GM12878 (cell line): ENCODE measurements at regions of chr1 and their contacts with region 1.

Region 1: GRCh38 chr1:205121660-205122488 is at the start of gene RBBP5:
- DNase-seq: peak; percentile 94
- ATAC-seq: peak; percentile 97
- H3K4me3 ChIP-seq: peak within 1 kb of the TSS; percentile 96
- H3K27ac ChIP-seq: peak within 1 kb of the TSS; percentile 99
- H3K4me1 ChIP-seq: no peaks in the 10 kb centered on the region; the same call in 1 of the 2 replicates
- H3K27me3 ChIP-seq: no peaks in the 10 kb centered on the region
- CTCF ChIP-seq: peak; percentile 76 to 84 (median 82)
- EP300 ChIP-seq: peak in 1 of 2 experiments; percentile 22; a peak in 2 of 4 replicates
- POLR2A ChIP-seq: peak; percentile 99
- RAD21 ChIP-seq: peak; percentile 55
- polyA plus RNA-seq, gene RBBP5: 10.0 to 11.5 TPM

Region 2: DNA sequence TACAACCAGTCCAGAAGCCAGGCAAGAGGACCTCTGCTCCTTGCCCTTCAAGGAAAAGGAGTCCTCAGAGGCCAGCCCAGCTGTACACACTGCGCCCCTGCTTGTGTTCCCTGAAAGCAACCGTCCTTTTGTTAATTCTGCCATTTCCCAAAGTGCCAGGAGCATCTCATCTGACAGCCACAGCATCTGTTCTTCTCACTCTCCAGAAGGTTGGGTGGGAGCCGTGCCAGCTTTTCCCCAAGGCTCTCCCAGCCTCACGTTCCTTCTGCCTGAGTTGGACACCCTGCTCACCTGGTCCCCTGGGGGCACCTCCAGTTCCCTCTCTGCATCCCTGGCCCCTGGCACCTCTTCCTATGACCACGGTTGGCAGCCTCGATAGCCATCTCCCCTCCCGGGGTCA is 89.4 kb before region 1 on chr1:
- CTCF ChIA-PET with region 1: no interaction called
- POLR2A ChIA-PET with region 1: no interaction called
- RAD21 ChIA-PET with region 1: no interaction called
- SMC1A ChIA-PET with region 1: no interaction called
- in situ Hi-C with region 1: no loop called
- intact Hi-C with region 1: no loop called
- DNase-seq: no peak
- ATAC-seq: no peak
- H3K4me3 ChIP-seq: no peak overlapping the region
- H3K27ac ChIP-seq: no peak overlapping the region
- H3K4me1 ChIP-seq: no peaks in the 10 kb centered on the region
- H3K27me3 ChIP-seq: peaks cover 0 to 3% of the 10 kb centered on the region in 2 experiments; a peak in 2 of 4 replicates
- CTCF ChIP-seq: no peak
- EP300 ChIP-seq: no peak
- POLR2A ChIP-seq: no peak
- RAD21 ChIP-seq: no peak

Region 3: GRCh38 chr1:205108464-205108863 is 13.4 kb before region 1 on chr1:
- CTCF ChIA-PET with region 1: interaction called, 10 read pairs
- POLR2A ChIA-PET with region 1: interaction called, 5 read pairs
- RAD21 ChIA-PET with region 1: interaction called, 3 read pairs
- SMC1A ChIA-PET with region 1: interaction called, 10 read pairs
- in situ Hi-C with region 1: no loop called
- intact Hi-C with region 1: no loop called
- DNase-seq: no peak
- ATAC-seq: no peak
- H3K4me3 ChIP-seq: no peak overlapping the region
- H3K27ac ChIP-seq: no peak overlapping the region
- H3K4me1 ChIP-seq: no peaks in the 10 kb centered on the region
- H3K27me3 ChIP-seq: no peaks in the 10 kb centered on the region
- CTCF ChIP-seq: no peak
- EP300 ChIP-seq: no peak
- POLR2A ChIP-seq: no peak
- RAD21 ChIP-seq: no peak

Region 4: DNA sequence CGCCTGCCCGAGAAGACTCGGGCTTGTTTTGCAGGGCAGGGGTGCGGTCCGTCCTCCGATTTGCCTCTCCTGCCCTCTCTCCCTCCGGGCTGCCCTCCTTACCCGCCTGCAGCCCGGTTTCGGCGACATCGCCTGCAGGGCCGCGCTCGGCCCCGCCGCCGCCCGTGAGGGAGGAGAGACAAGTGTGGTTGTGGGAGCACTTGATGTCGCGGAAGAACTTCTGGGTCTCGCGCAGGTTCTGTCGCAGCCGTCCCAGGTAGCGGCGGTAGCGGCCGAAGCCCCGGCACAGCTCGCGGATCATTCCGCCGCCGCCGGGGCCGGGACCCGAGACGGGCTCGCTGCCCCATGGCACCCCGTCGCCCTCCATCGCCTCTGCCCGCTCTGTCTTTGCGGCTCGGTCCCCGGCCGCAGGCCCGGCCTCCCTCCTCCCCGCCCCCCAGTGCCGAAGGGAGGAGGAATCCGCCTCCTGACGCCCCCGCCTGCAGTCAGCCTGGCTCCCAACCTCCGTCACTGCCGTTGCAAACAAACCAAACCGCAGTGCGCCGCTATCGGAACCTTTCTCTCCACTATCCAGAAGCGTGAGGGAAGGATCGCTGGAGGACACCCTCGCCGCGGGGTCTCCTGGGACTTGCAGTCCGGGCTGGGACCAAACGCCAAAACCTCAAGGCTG is 89.4 kb after region 1 on chr1 and contains the start of gene DSTYK:
- CTCF ChIA-PET with region 1: interaction called, 3 read pairs
- POLR2A ChIA-PET with region 1: no interaction called
- RAD21 ChIA-PET with region 1: no interaction called
- SMC1A ChIA-PET with region 1: interaction called, 3 read pairs
- in situ Hi-C with region 1: no loop called
- intact Hi-C with region 1: loop called (anchors 5 kb)
- DNase-seq: peak; percentile 70
- ATAC-seq: peak; percentile 89
- H3K4me3 ChIP-seq: peak within 1 kb of the TSS; percentile 88
- H3K27ac ChIP-seq: peak within 1 kb of the TSS; percentile 42
- H3K4me1 ChIP-seq: peaks cover 8% of the 10 kb centered on the region; the same call in 1 of the 2 replicates
- H3K27me3 ChIP-seq: no peaks in the 10 kb centered on the region
- CTCF ChIP-seq: 0 out of 6 replicates have a peak, but pooled peaks of 1 of the 3 experiments have one; percentile 1
- EP300 ChIP-seq: peak in 1 of 2 experiments; percentile 48; a peak in 2 of 4 replicates
- POLR2A ChIP-seq: peak; percentile 91
- RAD21 ChIP-seq: no peak
- polyA plus RNA-seq, gene DSTYK: 2.7 to 3.4 TPM